Adrenal gland (tissue), 19 donors: ENCODE measurements at regions of chr6 and their contacts with region 1.

Region 1: GRCh38 chr6:50791900-50792508 is 26.7 kb upstream of the TFAP2B start:
- DNase-seq: peak in 2 of 7 donors; percentile 16 to 18
- H3K4me3 ChIP-seq: no peak overlapping the region
- H3K27ac ChIP-seq: no peak overlapping the region
- H3K4me1 ChIP-seq: no peaks in the 10 kb centered on the region
- H3K27me3 ChIP-seq: no peaks in the 10 kb centered on the region
- CTCF ChIP-seq: peak; percentile 41 to 70 (median 55)
- POLR2A ChIP-seq: no peak

Region 2: DNA sequence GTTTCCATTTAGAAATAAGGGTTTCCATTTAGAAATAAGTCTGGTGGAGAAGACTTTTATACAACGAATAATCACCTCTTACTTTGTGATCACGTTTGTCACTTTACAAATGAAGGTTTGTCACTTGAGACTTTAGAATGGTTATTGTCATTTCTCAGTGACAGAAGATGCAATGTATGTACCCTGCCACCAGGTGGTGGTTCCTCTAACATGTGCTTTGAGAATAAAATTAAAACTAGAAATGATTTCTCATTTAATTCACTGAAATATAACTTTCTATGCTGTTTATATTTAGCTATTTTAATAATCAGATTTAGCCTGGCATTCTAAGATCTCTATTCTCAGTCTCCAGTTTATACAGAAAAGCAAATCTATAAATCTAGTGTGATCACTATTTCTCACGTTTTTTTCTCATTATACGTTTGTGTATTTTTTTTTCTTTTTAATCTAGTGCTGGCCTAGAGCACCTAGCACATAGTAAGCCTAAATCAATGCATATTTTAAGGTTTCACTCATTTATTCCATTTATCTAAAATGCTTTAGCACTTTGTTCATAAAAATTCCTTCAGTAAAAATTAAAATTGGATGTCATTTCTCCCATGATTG is 136.1 kb before region 1 on chr6:
- intact Hi-C with region 1: loop called in 1 of 2 experiments (anchors 5 kb)
- DNase-seq: peak in 2 of 7 donors; percentile 4 to 19
- H3K4me3 ChIP-seq: no peak overlapping the region
- H3K27ac ChIP-seq: no peak overlapping the region
- H3K4me1 ChIP-seq: no peaks in the 10 kb centered on the region
- H3K27me3 ChIP-seq: no peaks in the 10 kb centered on the region
- CTCF ChIP-seq: peak; percentile 36 to 53 (median 43)
- POLR2A ChIP-seq: no peak